Heart right ventricle (tissue), 16 donors: ENCODE measurements at regions of chr1 and their contacts with region 1.

Region 1: DNA sequence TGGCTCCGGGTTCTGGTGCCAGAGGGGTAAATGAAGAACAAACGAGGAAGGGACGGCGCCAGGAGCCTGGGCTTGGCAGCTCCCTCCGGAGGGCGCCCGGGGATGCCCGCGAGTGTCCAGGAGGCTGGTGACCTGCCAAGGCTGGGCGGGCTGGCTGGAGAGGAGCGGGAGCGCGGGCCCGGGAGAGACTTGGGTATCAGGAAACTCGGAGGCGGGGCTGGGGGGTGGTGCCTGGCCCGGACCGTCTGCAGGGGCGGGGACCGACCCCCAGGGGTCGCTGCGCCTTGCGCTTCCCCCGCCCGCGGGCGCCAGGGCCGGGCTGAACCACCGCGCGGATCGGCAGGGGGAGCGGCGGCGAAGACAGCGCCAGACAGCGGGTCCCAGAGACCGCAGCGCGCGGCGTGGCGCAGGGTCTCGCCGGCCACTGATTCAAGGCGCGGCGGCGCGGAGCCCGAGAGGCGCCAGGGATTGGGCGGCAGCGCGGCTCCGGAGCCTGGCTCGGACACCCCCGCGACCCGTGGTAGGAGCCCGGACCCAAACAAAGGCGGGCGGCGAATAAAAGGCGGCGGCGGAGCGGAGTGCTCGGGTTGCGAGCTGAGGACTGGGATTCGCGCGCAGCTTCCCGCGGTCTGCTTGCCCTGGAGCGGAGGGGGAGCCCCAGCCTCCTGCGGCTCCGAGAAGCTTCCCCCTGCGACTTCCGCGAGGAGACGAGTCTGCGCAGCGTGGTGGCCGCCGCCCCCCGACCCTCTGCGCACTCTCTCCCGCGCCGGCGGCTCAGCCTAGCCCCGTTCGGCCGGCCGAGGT is at the start of gene DISP3:
- DNase-seq: peak; percentile 44 to 52
- ATAC-seq: peak; percentile 73 to 87 (median 79)
- H3K4me3 ChIP-seq: peak within 1 kb of the TSS; percentile 38 to 63 (median 55)
- H3K27ac ChIP-seq: peak within 1 kb of the TSS in 1 of 10 donors; percentile 53
- H3K4me1 ChIP-seq: peaks cover 0 to 26% (median 16%) of the 10 kb centered on the region in 9 donors
- H3K27me3 ChIP-seq: peaks cover 5 to 90% (median 64%) of the 10 kb centered on the region in 7 donors
- CTCF ChIP-seq: peak; percentile 13 to 75 (median 59)
- total RNA-seq, gene DISP3: 0.05 to 0.21 (median 0.10) TPM in 6 of 10 donors, not detected in the others

Region 2: DNA sequence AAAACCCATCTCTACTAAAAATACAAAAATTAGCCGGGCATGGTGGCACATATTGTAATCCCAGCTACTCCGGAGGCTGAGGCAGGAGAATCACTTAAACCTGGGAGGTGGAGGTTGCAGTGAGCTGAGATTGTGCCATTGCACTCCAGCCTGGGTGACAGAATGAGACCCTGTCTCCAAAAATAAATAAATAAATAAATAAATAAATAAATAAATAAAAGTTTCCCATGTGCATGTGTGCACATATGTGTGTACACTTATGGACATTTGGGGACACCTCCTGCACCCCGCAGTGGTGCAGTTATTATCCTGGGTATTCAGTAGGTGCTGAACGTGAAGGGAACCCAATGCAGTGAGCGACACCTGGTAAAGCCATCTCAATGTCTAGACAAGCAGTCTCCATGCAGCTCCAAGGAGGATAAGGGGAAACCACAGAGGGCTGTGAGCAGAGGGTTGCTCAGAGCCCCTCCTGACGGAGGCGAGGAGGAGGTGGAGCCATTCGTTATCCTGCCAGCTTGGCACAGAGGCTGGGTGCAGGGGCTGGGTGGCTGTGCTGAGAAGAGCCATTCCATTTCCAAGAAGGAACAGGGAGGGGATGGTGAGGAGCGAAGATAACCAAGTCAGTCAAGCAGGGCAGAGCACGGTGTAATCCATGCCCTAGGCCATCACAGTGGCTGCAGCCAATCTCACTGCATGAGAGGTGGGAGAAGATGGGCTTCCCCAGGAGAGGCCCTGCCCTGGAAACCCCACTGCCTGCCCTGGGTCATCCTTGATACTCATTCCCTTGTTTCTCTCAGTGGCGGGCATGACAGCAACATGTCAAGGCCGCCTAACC is 180.2 kb before region 1 on chr1:
- intact Hi-C with region 1: no loop called
- DNase-seq: no peak
- ATAC-seq: no peak
- H3K4me3 ChIP-seq: no peak overlapping the region
- H3K27ac ChIP-seq: no peak overlapping the region
- H3K4me1 ChIP-seq: peaks cover 0 to 13% (median 0%) of the 10 kb centered on the region in 9 donors
- H3K27me3 ChIP-seq: no peaks in the 10 kb centered on the region
- CTCF ChIP-seq: no peak

Region 3: DNA sequence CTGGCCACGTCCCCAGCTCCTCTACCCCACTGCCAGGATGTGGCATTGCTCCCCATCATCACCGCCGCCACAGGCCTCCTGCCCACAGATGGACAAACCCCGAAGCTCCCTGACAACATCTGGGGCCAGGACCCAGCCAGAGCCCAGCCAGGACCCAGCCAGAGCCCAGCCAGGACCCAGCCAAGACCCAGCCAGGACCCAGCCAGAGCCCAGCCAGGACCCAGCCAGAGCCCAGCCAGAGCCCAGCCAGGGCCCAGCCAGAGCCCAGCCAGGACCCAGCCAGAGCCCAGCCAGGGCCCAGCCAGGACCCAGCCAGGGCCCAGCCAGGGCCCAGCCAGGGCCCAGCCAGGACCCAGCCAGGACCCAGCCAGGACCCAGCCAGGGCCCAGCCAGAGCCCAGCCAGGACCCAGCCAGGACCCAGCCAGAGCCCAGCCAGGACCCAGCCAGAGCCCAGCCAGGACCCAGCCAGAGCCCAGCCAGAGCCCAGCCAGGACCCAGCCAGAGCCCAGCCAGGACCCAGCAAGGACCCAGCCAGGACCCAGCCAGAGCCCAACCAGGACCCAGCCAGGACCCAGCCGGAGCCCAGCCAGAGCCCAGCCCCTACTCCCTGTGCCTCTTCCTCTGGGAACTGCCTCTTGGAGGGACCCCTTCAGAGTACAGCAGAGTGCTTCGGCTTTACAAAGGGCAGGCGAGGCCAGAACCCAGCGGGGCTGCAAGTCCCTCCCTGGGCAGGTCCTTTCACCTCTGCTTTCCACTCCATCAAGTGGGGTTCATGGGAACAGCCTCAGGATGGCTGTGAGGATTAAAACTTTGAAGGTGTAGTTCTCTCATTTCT is 43.8 kb after region 1 on chr1:
- intact Hi-C with region 1: no loop called
- DNase-seq: no peak
- ATAC-seq: no peak
- H3K4me3 ChIP-seq: no peak overlapping the region
- H3K27ac ChIP-seq: no peak overlapping the region
- H3K4me1 ChIP-seq: no peaks in the 10 kb centered on the region
- H3K27me3 ChIP-seq: peaks cover 0 to 10% (median 0%) of the 10 kb centered on the region in 7 donors
- CTCF ChIP-seq: no peak

Region 4: DNA sequence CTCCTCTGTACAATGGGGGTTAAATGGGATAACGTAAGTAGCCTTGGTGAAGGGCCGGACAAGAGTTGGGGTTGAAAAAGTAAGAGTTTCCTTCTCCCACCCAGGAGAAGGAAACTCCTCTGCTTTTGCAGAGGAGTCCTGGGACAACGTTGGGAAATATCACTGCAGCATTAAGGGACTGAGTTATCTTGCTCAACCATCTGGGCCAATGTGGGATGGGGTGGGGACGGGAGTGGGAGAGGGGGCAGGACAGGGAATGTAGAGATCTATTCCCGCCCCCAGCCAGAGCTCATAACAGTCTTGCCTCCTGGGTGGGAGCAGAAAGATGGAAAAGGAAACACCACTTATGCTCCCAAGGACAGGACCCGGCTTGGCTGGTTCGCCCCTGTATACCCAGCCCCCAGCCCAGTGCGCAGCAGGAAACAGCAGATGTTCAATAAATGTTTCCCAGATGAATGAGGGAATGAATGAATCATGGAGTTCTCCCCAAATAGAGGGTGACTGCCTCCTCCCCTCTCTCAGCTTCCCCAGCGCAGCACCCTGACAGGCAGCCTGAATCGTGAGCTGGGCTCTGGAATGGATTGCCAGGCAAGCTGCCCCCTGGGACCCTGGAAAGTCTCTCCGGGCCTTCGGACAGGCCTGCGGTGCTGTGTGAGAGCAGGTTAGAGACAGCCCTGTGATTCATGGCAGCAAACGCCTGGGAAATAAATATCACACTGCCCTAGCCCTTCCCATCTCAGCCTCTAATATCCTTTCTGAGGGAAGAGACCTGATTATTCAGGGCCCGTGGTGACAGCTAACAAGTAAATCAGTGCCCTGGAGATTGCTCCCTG is 150.6 kb after region 1 on chr1:
- intact Hi-C with region 1: loop called in 3 of 10 experiments (anchors 10 kb)
- DNase-seq: no peak
- ATAC-seq: no peak
- H3K4me3 ChIP-seq: no peak overlapping the region
- H3K27ac ChIP-seq: no peak overlapping the region
- H3K4me1 ChIP-seq: no peaks in the 10 kb centered on the region
- H3K27me3 ChIP-seq: peaks cover 0 to 74% (median 49%) of the 10 kb centered on the region in 7 donors
- CTCF ChIP-seq: no peak

Region 5: DNA sequence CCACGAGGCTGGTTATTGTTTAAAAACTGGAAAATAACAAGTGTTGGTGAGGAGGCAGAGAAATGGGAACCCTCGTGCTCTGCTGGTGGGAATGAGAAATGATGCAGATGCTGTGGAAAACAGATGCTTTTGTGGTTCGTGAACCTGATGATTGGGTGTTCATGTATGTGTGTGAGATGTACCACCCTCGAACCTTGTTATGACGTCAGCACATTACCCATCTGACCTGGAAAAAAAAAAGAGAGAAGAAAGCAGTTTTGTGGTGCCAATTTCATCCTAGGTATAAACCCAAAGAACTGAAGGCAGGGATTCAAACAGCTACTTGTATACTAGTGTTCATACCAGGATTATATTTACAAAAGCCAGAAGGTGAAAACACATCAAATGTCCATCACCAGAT is 1260.8 kb after region 1 on chr1:
- intact Hi-C with region 1: loop called in 1 of 10 experiments (anchors 5 kb)
- DNase-seq: no peak
- ATAC-seq: no peak
- H3K4me3 ChIP-seq: no peak overlapping the region
- H3K27ac ChIP-seq: no peak overlapping the region
- H3K4me1 ChIP-seq: no peaks in the 10 kb centered on the region
- H3K27me3 ChIP-seq: peaks cover 0 to 37% (median 12%) of the 10 kb centered on the region in 7 donors
- CTCF ChIP-seq: no peak